Astrocyte of the cerebellum (primary cell): ENCODE measurements at regions of chr18 and their contacts with region 1.

Region 1: DNA sequence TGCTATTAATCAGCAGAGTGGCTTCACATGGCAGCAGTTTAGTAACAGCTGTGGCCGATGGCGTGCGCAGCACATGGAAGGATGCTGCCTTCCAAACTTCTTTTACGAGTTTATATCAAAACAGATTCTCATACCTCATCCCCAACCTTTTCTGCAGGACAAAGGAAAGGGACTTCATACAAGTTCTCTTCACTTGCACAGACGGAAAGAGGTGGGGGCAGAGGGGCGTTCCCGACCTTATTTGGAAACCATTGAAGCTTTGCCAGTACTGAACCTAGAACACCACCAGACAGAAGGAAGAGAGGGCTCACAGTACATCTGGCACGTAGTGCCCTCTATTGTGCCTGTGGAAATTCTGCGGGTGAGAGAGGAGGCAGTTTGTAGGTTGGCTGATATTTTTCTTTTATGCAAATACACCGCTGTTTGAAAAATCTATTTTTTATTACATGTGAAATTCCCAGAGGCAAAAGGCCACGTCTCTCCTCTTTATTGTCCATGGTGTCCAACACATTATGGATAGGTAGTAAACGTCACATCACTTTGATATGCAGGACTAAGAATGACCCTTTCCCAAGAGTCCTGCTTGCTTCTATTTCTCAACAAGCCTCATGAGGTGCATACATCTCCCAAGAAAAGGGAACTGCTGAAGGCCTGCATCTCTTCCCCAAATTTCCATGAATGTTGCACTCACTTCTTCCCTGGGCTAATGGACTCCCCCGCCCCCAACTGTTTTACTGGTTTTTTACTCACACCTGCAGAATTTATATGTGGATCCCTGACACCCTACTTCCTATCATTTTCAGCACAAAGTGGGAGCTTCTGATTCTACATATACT is 31.3 kb downstream of the COLEC12 start:
- DNase-seq: no peak
- H3K4me3 ChIP-seq: no peak overlapping the region
- CTCF ChIP-seq: no peak

Region 2: GRCh38 chr18:361939-362309 is 107.2 kb before region 1 on chr18:
- in situ Hi-C with region 1: loop called (anchors 5 kb)
- DNase-seq: peak; percentile 57
- H3K4me3 ChIP-seq: no peak overlapping the region
- CTCF ChIP-seq: no peak

Region 3: DNA sequence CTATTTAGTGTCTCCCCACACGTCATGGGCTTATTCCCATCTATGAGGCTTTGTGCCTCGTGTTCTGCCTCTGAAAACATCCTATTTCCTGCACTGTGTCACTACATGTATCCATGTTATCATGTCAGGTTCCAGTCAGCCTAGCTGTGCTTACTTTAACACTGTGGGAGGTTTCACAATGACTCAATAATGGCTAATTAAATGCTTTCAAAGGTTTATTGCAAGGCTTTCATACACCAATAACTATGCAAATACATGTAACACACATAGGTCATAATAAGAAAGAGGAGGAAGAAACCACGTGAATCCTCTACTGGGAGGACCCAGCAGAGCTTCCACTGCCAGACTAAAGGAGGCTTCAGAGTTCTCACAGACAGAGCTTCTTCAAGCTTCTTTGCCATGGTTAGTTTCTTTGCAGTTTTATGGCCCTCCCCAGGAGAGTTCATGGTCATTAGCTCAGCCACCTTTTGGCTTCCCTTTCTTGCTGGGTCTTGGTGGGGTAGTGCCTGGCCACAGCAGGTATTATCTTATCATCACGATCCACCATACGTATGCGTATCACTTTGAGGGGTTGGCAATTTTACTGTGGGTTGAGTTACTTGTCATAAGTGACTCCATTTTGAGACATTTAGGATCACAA is 36.4 kb after region 1 on chr18:
- in situ Hi-C with region 1: no loop called
- DNase-seq: no peak
- H3K4me3 ChIP-seq: no peak overlapping the region
- CTCF ChIP-seq: no peak